HCT116 (cell line): ENCODE measurements at regions of chr3 and their contacts with region 1.

Region 1: DNA sequence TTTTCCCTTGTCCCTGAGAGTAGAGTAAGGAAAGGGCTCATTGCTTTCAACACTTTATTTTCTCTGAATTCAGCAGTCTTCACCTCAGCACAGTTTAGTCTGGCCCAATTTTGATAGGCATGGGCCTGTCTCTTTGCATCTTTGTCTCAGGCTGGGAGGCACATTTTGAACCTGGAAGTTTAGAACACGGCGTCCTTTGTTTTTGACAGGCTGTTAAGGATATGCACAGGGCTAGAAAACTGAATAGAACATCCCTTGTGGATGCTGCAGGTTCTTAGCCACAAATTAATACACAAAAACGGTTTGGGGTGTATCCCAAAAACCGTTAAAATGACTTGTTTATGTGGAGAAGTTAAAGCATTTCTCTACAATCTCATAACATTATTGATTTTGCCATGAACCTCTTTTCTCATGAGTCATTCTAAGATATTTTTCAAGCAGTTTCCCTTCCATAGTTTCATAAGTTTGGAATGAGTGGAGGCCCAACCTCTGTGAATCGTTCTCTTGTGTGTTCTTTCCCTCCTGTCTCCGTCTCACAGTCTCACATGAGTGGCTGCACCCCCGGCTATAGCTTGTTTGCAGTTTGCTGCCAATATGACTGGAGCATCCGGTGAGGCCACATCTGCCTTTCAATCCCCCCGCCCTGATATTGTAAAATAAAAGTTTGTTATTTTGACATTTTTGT is 192.9 kb upstream of the EIF1B start:
- DNase-seq: no peak
- ATAC-seq: no peak
- H3K4me3 ChIP-seq: no peak overlapping the region
- H3K27ac ChIP-seq: no peak overlapping the region
- H3K4me1 ChIP-seq: peaks cover 17% of the 10 kb centered on the region in 2 experiments
- H3K27me3 ChIP-seq: no peaks in the 10 kb centered on the region
- CTCF ChIP-seq: no peak
- POLR2A ChIP-seq: no peak
- RAD21 ChIP-seq: no peak

Region 2: DNA sequence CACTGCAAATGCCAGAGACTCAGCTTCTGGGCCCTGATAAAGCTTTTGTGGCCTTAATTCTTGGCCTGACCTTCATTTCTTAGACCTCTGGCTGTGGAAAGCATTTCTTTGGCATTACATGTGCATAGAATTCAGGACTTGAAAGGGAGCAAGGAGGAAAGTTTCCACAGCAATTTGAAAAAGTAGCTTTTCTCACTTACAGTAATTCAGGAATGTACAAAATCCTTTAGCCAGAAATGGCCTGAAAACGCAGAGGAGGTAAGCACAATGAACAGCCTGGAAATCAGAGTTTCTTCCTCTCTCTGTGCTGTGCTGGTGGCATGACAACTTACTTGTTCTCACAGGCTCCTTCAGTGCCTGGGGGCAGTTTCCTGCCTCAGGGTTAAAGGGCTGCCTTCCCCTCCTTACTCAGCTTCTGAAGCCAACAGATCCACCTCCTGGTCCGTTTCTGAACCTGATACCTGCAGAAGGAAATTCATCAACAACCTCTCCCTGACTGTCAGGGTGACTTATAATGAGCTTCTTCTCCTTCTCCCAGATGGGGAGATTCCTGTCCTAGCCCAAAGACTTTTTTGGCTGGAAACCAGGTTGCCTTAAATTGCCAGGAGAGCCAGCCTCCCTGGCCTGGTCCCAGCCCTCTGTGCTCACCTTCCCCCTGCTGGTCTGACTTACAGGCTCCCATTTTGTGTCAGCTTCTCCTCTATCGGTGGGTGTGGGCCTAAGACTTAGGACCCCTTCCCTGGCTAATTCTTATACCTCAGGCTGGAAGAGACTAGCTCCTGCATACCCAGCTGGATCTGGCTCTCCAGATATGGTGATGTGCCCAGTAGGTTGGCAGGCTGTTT is 204.9 kb before region 1 on chr3:
- CTCF ChIA-PET with region 1: no interaction called
- POLR2A ChIA-PET with region 1: no interaction called
- RAD21 ChIA-PET with region 1: no interaction called
- intact Hi-C with region 1: no loop called
- DNase-seq: no peak
- ATAC-seq: peak; percentile 42; the same call in 1 of the 2 replicates
- H3K4me3 ChIP-seq: no peak overlapping the region
- H3K27ac ChIP-seq: no peak overlapping the region
- H3K4me1 ChIP-seq: peaks cover 0 to 7% of the 10 kb centered on the region in 2 experiments; a peak in 1 of 4 replicates
- H3K27me3 ChIP-seq: no peaks in the 10 kb centered on the region
- CTCF ChIP-seq: peak in 1 of 3 experiments; percentile 23; a peak in 2 of 6 replicates
- POLR2A ChIP-seq: no peak
- RAD21 ChIP-seq: no peak

Region 3: DNA sequence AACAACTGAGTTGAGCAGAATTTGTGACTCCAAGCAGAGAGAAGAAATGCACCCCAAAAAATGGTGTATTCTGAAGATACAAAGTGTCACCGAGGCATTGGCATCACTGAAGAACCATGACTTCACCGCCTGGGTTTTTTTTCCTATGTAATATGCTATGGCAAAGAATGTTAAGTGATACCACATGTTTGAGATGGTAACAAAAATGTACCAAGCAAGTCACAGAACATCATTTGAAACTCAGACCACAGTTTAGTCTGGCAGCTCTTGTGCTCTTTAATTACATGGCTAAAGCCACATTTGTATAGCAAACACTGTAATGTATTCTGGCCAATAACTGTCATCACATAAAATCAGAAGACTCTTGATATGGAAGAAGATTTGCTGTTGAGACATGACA is 1521.8 kb after region 1 on chr3:
- CTCF ChIA-PET with region 1: no interaction called
- POLR2A ChIA-PET with region 1: no interaction called
- RAD21 ChIA-PET with region 1: no interaction called
- intact Hi-C with region 1: loop called (anchors 5 kb)
- DNase-seq: no peak
- ATAC-seq: no peak
- H3K4me3 ChIP-seq: no peak overlapping the region
- H3K27ac ChIP-seq: no peak overlapping the region
- H3K4me1 ChIP-seq: no peaks in the 10 kb centered on the region
- H3K27me3 ChIP-seq: no peaks in the 10 kb centered on the region
- CTCF ChIP-seq: no peak
- POLR2A ChIP-seq: no peak
- RAD21 ChIP-seq: no peak